ENCODE measurements at regions of chr12 and their contacts with region 1.

Region 1: DNA sequence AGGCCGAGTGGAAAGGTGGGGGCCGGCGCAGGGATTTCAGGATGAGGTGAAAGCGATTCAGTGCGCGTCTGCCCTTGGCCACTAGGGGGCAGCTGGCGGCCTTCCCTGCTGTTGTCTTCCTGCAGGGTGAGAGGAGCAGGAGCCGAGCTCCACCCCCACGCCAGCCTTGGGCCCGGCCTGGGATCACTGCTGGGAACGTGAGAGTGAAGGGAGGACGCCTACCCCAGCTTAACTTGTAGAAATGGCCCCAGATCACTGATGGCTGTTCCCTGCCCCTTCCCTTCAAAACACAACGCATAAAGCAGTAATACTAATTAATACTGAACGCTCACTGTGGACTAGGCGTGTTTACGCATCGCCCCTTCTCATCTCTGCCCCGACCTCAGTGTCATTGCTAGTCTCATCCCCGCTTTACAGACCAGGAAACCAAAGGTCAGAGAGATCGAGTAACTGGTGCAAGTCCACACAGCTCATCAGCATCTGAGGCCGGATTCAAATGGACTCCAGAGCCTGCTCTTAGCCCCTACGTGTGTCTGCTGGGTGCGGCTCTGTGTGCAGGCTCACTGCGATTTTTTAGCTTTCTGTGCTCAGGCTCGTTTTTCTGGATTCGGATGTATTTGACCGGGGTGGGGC is 24.3 kb downstream of the MVK start:
- DNase-seq: peak; percentile 72 to 97
- H3K4me3 ChIP-seq: no peak overlapping the region
- H3K27ac ChIP-seq: no peak overlapping the region
- H3K4me1 ChIP-seq: peaks cover 0 to 7% (median 2%) of the 10 kb centered on the region in 4 experiments; a peak in 4 of 7 replicates
- H3K27me3 ChIP-seq: no peaks in the 10 kb centered on the region
- CTCF ChIP-seq: peak; percentile 96 to 98 (median 97)
- EP300 ChIP-seq: no peak
- POLR2A ChIP-seq: peak in 1 of 2 experiments; percentile 46; a peak in 1 of 3 replicates
- RAD21 ChIP-seq: peak; percentile 92 to 96

Region 2: GRCh38 chr12:109573029-109573913 is 24.6 kb before region 1 on chr12 and contains the starts of genes MMAB and MVK:
- CTCF ChIA-PET with region 1: interaction called, 13 read pairs
- POLR2A ChIA-PET with region 1: interaction called, 3 read pairs
- DNase-seq: peak; percentile 96 to 99
- H3K4me3 ChIP-seq: peak within 1 kb of the TSS; percentile 80 to 87 (median 81)
- H3K27ac ChIP-seq: peak within 1 kb of the TSS; percentile 91
- H3K4me1 ChIP-seq: peaks cover 2 to 4% (median 3%) of the 10 kb centered on the region in 4 experiments; a peak in 4 of 7 replicates
- H3K27me3 ChIP-seq: no peaks in the 10 kb centered on the region
- CTCF ChIP-seq: peak in 1 of 3 experiments; percentile 8; a peak in 1 of 4 replicates
- EP300 ChIP-seq: no peak
- POLR2A ChIP-seq: peak in 1 of 2 experiments; percentile 81; a peak in 2 of 3 replicates
- RAD21 ChIP-seq: no peak
- total RNA-seq, gene MMAB: 17.1 and 18.5 TPM in 2 replicates
- total RNA-seq, gene MVK: 15.7 and 17.0 TPM in 2 replicates

Region 3: DNA sequence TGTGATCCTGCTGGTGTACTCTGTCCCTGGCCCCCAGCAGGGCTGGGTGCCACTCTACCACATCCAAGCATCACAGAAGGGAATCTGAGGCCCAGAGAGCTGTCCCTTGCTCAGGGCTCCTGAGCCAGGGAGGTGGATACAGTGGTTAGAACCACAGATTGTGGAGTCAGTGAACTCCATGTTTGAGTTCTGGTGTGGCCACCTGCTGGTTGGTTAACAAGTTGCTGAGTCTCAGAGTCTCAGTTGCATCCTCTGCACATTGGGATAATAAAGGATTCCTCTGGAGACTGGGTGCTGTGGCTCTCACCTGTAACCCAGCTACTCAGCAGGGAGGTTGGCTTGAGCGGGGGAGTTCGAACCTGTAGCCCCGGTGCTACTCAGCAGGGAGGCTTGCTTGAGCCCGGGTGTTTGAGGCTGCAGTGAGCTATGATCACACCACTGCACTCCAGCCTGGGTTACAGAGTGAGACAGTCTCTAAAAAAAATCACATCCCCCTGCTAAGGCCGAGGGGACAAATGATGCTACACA is 15.1 kb after region 1 on chr12:
- CTCF ChIA-PET with region 1: interaction called, 42 read pairs
- POLR2A ChIA-PET with region 1: interaction called, 3 read pairs
- DNase-seq: no peak
- H3K4me3 ChIP-seq: no peak overlapping the region
- H3K27ac ChIP-seq: no peak overlapping the region
- H3K4me1 ChIP-seq: peaks cover 0 to 3% (median 0%) of the 10 kb centered on the region in 4 experiments; a peak in 2 of 7 replicates
- H3K27me3 ChIP-seq: 0 out of 7 replicates have a peak, but pooled peaks cover 0 to 2% (median 0%) of the 10 kb centered on the region in 4 experiments
- CTCF ChIP-seq: peak in 1 of 3 experiments; percentile 47; a peak in 2 of 4 replicates
- EP300 ChIP-seq: no peak
- POLR2A ChIP-seq: no peak
- RAD21 ChIP-seq: peak; percentile 10 to 39; a peak in 1 of 4 replicates

Region 4: DNA sequence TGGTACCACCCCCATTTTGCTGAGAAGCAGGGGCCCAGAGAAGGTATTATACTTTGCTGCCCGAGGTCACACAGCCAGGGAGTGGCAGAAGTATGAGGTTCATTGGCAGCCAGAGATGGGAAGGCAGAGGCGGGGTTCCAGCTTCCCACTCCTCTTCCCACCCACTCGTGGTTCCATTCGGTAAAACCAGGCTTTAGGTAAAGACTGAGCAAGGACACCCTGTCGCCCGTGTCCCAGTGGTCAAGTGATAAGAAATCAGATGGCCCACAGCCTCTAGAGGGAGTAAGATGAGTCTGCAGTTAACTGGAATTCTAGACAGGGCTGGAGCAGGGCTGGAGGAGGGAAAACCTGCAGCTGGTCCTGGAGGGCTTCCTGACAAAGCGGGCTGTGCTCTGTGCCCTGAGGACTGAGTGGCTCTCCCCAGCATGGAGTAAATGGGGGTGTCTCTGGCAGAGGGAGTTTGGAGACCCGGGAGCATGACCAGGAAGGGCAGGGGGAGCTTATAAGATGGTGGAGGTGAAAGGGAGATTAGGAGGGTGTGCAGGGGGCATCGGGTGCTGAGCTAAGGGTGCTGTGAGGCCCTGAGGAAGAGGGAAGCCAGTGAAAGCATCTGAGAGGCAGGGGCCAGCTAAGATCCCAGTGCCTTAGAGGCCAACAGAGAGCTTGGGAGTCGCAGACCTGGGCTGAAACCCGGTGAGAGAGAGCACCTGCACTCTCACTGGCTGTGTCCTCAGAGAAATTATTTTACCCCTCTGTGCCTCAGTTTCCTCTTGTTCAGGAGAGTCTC is 121.5 kb after region 1 on chr12:
- CTCF ChIA-PET with region 1: interaction called, 30 read pairs
- POLR2A ChIA-PET with region 1: interaction called, 6 read pairs
- DNase-seq: no peak
- H3K4me3 ChIP-seq: no peak overlapping the region
- H3K27ac ChIP-seq: 0 out of 2 replicates have a peak overlapping the region, but pooled peaks have one; percentile 14
- H3K4me1 ChIP-seq: peaks cover 0 to 33% (median 15%) of the 10 kb centered on the region in 4 experiments; a peak in 6 of 7 replicates
- H3K27me3 ChIP-seq: peaks cover 4 to 40% (median 39%) of the 10 kb centered on the region in 4 experiments
- CTCF ChIP-seq: peak in 2 of 3 experiments; percentile 51 to 62; a peak in 3 of 4 replicates
- EP300 ChIP-seq: no peak
- POLR2A ChIP-seq: no peak
- RAD21 ChIP-seq: peak; percentile 30 to 57; a peak in 2 of 4 replicates

Region 5: GRCh38 chr12:109763201-109763841 is 165.4 kb after region 1 on chr12:
- CTCF ChIA-PET with region 1: interaction called, 31 read pairs
- POLR2A ChIA-PET with region 1: no interaction called
- DNase-seq: peak in 1 of 2 experiments; percentile 35
- H3K4me3 ChIP-seq: no peak overlapping the region
- H3K27ac ChIP-seq: no peak overlapping the region
- H3K4me1 ChIP-seq: peaks cover 0 to 10% (median 4%) of the 10 kb centered on the region in 4 experiments; a peak in 6 of 7 replicates
- H3K27me3 ChIP-seq: no peaks in the 10 kb centered on the region
- CTCF ChIP-seq: no peak
- EP300 ChIP-seq: no peak
- POLR2A ChIP-seq: no peak
- RAD21 ChIP-seq: no peak

Region 6: GRCh38 chr12:110023059-110023606 is 425.2 kb after region 1 on chr12:
- CTCF ChIA-PET with region 1: no interaction called
- POLR2A ChIA-PET with region 1: no interaction called
- DNase-seq: no peak
- H3K4me3 ChIP-seq: no peak overlapping the region
- H3K27ac ChIP-seq: no peak overlapping the region
- H3K4me1 ChIP-seq: peaks cover 0 to 7% (median 5%) of the 10 kb centered on the region in 4 experiments; a peak in 3 of 7 replicates
- H3K27me3 ChIP-seq: no peaks in the 10 kb centered on the region
- CTCF ChIP-seq: no peak
- EP300 ChIP-seq: no peak
- POLR2A ChIP-seq: no peak
- RAD21 ChIP-seq: no peak